ENCODE measurements at regions of chr12 and their contacts with region 1.

Region 1: GRCh38 chr12:5988659-5989116 is 43.6 kb upstream of the ANO2 start:
- DNase-seq: peak; percentile 5
- H3K4me3 ChIP-seq: no peak overlapping the region
- CTCF ChIP-seq: peak; percentile 98

Region 2: GRCh38 chr12:5643266-5643665 is 345.4 kb before region 1 on chr12:
- CTCF ChIA-PET with region 1: no interaction called
- POLR2A ChIA-PET with region 1: no interaction called
- DNase-seq: no peak
- H3K4me3 ChIP-seq: no peak overlapping the region
- CTCF ChIP-seq: no peak

Region 3: GRCh38 chr12:5960783-5961182 is 27.9 kb before region 1 on chr12:
- CTCF ChIA-PET with region 1: interaction called, 12 read pairs
- POLR2A ChIA-PET with region 1: no interaction called
- DNase-seq: no peak
- H3K4me3 ChIP-seq: no peak overlapping the region
- CTCF ChIP-seq: no peak

Region 4: DNA sequence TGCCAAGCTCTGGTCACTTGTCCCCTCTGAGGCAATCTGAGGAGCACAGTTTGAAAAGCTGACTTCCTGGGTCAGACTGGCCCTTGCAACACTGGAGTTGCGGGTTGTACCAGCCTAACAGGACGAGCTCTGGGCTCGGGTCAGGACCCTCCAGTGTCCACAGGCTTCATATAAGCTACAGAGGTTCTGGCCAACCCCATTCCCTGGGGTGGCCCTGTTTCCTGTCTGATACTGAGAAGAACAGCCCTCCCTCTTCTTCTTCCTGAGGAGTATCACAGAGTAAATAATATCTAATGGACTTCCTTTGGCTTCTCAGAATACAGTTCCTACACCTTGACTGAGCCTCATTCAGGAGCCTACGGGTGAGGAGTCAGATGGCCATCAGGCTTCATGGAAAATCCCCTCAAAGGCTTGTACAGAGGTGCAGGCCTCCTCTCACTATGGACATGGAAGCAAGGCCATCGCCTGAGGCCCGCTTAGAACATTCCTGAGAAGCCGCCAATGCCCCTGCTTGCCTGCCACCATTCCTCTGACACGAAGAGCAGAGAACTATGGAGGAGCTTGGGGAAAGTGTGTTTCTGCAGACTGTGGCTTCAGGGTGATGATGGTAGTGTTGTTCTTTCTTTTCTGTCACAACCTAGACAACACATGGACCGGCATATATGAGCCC is 15.1 kb before region 1 on chr12:
- CTCF ChIA-PET with region 1: interaction called, 48 read pairs
- POLR2A ChIA-PET with region 1: no interaction called
- DNase-seq: no peak
- H3K4me3 ChIP-seq: no peak overlapping the region
- CTCF ChIP-seq: no peak

Region 5: DNA sequence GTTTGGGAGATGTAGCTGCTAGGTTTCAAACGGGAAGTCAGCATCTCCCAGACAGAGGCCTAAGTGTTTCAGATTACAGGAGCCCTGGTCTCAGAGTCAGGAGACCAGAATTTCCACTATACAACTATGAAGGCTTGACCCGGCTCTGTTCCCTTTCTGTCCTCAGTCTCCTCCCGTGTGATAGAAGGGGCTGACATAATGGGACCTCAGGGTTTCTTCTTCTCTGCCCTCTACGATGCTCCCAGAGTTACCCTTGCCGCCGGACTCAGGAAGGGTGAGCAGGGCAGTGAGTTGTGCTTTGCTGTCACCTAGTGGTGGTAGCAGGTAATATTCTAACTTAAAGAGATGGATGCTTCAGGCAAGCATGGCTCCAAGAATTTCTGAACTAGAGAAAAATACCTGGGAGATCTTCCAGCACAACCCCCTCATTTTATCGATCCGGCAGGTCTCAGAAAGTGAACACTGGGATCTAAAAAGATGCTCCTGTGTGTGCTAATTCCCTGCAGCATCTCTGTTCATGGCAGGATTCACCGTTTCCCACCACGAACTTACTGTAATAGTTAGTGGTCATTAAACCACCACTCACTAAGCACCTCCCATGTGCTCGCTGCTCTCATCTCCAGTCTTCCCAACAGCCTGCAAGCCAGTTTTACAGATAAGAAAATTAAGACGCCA is 51.3 kb after region 1 on chr12:
- CTCF ChIA-PET with region 1: interaction called, 616 read pairs
- POLR2A ChIA-PET with region 1: no interaction called
- DNase-seq: no peak
- H3K4me3 ChIP-seq: no peak overlapping the region
- CTCF ChIP-seq: peak; percentile 79

Region 6: DNA sequence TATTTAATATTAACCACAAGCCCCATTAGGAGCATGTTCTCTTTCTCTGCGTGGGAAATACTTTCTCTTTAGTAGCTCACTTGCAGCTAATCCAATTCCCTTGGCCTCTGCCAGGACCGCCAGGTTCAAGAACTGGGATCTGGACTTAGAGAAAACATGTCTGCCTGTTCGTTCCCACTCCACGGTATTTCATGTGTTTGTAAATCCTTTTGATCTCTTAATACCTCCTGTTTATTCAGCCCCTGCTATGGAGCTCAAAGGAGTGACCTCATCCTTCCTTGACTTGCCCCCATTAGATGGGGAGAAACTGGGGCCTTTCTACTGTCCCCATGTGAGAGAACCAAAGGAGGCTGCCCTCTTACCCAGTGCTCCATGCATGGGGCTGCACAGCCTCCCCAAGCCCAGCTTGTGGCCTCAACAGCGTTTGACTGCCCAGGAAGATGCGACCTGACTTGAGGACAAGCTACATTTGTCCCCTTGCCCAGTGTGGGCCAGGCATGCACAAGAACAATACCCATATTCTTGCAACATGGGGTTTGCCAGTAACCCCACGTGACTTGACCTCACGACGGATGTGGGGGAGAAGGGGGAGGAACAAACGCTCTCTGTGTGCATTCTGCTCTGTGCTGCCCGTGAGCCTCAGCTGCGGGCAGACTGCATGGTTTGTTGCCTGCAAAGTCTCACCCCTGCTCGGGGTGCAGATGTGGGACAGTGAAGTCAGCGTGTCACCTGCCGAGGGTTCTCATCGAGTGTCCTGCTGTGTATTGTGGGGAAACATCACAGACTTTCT is 241.8 kb after region 1 on chr12:
- CTCF ChIA-PET with region 1: interaction called, 11 read pairs
- POLR2A ChIA-PET with region 1: no interaction called
- DNase-seq: no peak
- H3K4me3 ChIP-seq: no peak overlapping the region
- CTCF ChIP-seq: no peak

Region 7: GRCh38 chr12:6285063-6285477 is 296.4 kb after region 1 on chr12:
- CTCF ChIA-PET with region 1: interaction called, 155 read pairs
- POLR2A ChIA-PET with region 1: no interaction called
- DNase-seq: no peak
- H3K4me3 ChIP-seq: no peak overlapping the region
- CTCF ChIP-seq: peak; percentile 73

Measured in AG04449 (cell line).